GM23248 (cell line): ENCODE measurements at regions of chr5 and their contacts with region 1.

Region 1: GRCh38 chr5:74035521-74035981 is 409.6 kb downstream of the ARHGEF28 start:
- DNase-seq: peak; percentile 72
- H3K4me3 ChIP-seq: peak overlapping the region; percentile 63
- H3K27ac ChIP-seq: no peak overlapping the region
- H3K4me1 ChIP-seq: peaks cover 29% of the 10 kb centered on the region
- H3K27me3 ChIP-seq: no peaks in the 10 kb centered on the region

Region 2: DNA sequence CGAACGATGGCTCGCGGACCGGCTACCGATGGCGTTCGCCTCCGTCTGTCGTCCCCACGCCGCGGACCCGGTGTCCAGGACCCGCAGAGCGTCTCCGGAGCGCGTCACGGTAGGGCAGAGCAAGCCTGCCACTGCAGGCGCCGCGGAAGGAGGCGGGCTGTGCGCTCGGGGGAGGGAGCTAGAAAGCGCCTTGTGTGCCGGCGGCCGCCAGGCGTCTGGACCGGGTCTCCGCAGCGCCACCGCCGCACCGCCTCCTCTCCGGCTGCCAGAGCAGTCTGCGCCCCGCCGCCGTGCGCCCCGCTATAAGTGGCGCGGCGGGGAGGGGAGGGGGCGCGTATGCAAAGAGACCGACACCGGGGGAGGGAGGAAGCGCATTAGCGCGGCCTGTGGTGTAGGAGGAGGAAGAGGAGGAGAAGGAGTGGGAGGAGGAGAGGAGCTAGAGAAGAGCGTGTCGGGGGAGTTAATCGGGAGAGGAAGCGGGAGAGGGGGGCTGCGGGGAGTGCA is 605.0 kb after region 1 on chr5 and contains the start of gene ENC1:
- in situ Hi-C with region 1: loop called (anchors 10 kb)
- DNase-seq: peak; percentile 95
- H3K4me3 ChIP-seq: peak within 1 kb of the TSS; percentile 89
- H3K27ac ChIP-seq: peak within 1 kb of the TSS; percentile 57
- H3K4me1 ChIP-seq: peaks cover 38% of the 10 kb centered on the region
- H3K27me3 ChIP-seq: no peaks in the 10 kb centered on the region
- total RNA-seq, gene ENC1: 15.3 and 18.5 TPM in 2 replicates